ENCODE measurements at regions of chr3 and their contacts with region 1.

Region 1: DNA sequence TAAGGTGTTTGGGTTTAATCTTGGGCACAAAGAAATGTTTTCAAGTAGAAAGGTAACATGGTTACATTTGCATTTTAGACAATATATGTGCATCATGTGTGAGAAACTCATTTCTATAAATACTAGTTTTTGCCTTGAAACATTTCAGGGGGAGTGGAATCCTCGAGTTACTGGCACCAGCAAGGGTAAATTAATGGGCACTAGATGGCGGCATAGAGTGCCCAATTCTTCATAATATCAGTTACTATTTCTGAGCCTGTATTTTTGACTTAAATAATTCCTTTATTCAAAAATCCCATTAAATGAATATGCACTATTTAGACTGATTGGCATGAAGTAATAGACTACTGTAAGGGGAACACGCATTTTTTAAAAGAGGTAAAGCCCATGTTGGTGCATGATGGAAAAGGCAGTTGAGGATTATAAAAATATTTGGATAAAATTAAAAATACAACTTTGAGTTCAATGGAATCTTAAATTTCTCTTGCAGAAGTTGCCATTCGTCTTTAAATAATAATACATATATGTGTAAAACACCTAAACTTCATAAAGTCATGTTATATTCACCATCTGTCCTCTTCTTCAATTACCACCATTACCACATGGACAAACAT is 106.3 kb downstream of the ZBTB20 start:
- DNase-seq: peak; percentile 2
- ATAC-seq: peak; percentile 77
- H3K4me3 ChIP-seq: no peak overlapping the region
- H3K27ac ChIP-seq: no peak overlapping the region
- H3K4me1 ChIP-seq: no peaks in the 10 kb centered on the region
- H3K27me3 ChIP-seq: no peaks in the 10 kb centered on the region
- CTCF ChIP-seq: peak; percentile 62 to 66 (median 64)
- EP300 ChIP-seq: no peak
- POLR2A ChIP-seq: no peak
- RAD21 ChIP-seq: peak; percentile 59

Region 2: DNA sequence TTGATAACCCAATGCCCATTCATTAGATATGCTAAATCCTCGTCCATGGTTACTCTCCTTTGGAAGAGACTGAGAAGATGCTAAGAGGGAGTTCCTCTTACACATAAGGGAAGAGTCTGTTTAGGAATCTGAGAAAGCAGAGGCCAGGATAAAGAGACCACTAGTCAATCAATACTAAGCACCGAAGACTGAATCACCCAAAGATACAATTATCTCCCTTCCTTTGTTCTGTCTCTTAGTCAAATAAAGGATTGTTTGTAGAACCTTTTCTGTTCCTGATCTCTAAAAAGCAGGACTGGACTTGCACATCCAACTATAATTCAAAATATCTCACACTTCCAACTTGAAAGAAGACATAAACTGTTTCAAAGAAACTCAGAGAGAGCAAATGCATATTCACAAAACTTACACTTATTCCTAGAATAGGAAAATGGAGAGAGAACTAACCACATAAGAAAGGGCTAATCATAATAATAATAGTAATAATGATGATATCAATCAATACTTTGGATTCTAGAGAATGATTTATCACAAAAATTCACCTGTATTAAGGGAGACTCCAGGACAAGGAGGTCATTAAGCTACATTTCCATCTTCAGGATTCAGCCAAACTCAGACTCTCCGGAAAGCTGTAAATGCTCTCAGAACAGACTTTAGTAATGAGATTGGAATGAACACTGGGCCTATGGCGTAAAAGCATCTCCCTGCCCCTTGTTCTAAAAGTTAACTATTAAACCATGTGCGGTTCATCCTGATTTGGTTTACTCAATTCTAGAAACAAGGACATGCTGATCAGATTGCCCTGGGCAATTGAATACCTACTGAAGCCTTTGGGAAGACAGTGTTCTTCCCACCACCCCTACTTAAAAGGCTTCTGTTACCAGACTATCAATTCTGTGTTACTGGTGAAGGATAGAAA is 295.2 kb before region 1 on chr3:
- CTCF ChIA-PET with region 1: no interaction called
- POLR2A ChIA-PET with region 1: no interaction called
- RAD21 ChIA-PET with region 1: no interaction called
- SMC1A ChIA-PET with region 1: no interaction called
- in situ Hi-C with region 1: no loop called
- intact Hi-C with region 1: no loop called
- DNase-seq: no peak
- ATAC-seq: no peak; the same call in 2 of the 3 replicates
- H3K4me3 ChIP-seq: no peak overlapping the region
- H3K27ac ChIP-seq: no peak overlapping the region
- H3K4me1 ChIP-seq: peaks cover 7% of the 10 kb centered on the region; the same call in 1 of the 2 replicates
- H3K27me3 ChIP-seq: no peaks in the 10 kb centered on the region
- CTCF ChIP-seq: no peak
- EP300 ChIP-seq: no peak
- POLR2A ChIP-seq: no peak
- RAD21 ChIP-seq: no peak

Region 3: DNA sequence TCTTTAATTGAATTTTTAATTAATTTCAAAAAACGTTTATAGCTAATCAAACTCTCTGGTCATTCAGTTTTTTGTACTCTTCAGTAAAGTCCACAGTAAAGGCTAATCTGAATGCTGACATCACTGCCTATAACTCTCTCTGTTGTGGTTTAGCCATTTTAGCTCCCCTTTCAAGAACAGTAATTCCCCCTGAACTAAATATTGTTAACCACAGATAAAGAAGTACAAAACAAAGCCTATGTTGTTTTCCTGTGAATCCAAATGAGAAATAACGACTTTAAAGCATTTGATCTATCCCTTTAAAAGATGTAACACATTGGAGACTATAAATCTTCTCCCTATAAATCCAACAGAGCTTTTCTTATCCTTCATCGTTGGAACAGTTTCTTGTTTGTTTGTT is 12.1 kb after region 1 on chr3:
- CTCF ChIA-PET with region 1: interaction called, 12 read pairs
- POLR2A ChIA-PET with region 1: no interaction called
- RAD21 ChIA-PET with region 1: no interaction called
- SMC1A ChIA-PET with region 1: interaction called, 7 read pairs
- in situ Hi-C with region 1: no loop called
- intact Hi-C with region 1: no loop called
- DNase-seq: no peak
- ATAC-seq: 0 out of 3 replicates have a peak, but pooled peaks have one; percentile 40
- H3K4me3 ChIP-seq: no peak overlapping the region
- H3K27ac ChIP-seq: no peak overlapping the region
- H3K4me1 ChIP-seq: no peaks in the 10 kb centered on the region
- H3K27me3 ChIP-seq: no peaks in the 10 kb centered on the region
- CTCF ChIP-seq: no peak
- EP300 ChIP-seq: no peak
- POLR2A ChIP-seq: no peak
- RAD21 ChIP-seq: no peak

Region 4: GRCh38 chr3:115169808-115170207 is 129.0 kb after region 1 on chr3:
- CTCF ChIA-PET with region 1: interaction called, 11 read pairs
- POLR2A ChIA-PET with region 1: no interaction called
- RAD21 ChIA-PET with region 1: interaction called, 3 read pairs
- SMC1A ChIA-PET with region 1: interaction called, 5 read pairs
- in situ Hi-C with region 1: no loop called
- intact Hi-C with region 1: no loop called
- DNase-seq: no peak
- ATAC-seq: no peak
- H3K4me3 ChIP-seq: no peak overlapping the region
- H3K27ac ChIP-seq: no peak overlapping the region
- H3K4me1 ChIP-seq: no peaks in the 10 kb centered on the region
- H3K27me3 ChIP-seq: no peaks in the 10 kb centered on the region; a peak in 1 of 4 replicates
- CTCF ChIP-seq: no peak; a peak in 2 of 6 replicates
- EP300 ChIP-seq: no peak
- POLR2A ChIP-seq: no peak
- RAD21 ChIP-seq: no peak